ENCODE measurements at regions of chr20 and their contacts with region 1.

Region 1: GRCh38 chr20:2162125-2162822 is 60.6 kb downstream of the STK35 start:
- DNase-seq: no peak
- H3K4me3 ChIP-seq: no peak overlapping the region
- H3K27ac ChIP-seq: no peak overlapping the region
- H3K27me3 ChIP-seq: no peaks in the 10 kb centered on the region
- CTCF ChIP-seq: no peak

Region 2: DNA sequence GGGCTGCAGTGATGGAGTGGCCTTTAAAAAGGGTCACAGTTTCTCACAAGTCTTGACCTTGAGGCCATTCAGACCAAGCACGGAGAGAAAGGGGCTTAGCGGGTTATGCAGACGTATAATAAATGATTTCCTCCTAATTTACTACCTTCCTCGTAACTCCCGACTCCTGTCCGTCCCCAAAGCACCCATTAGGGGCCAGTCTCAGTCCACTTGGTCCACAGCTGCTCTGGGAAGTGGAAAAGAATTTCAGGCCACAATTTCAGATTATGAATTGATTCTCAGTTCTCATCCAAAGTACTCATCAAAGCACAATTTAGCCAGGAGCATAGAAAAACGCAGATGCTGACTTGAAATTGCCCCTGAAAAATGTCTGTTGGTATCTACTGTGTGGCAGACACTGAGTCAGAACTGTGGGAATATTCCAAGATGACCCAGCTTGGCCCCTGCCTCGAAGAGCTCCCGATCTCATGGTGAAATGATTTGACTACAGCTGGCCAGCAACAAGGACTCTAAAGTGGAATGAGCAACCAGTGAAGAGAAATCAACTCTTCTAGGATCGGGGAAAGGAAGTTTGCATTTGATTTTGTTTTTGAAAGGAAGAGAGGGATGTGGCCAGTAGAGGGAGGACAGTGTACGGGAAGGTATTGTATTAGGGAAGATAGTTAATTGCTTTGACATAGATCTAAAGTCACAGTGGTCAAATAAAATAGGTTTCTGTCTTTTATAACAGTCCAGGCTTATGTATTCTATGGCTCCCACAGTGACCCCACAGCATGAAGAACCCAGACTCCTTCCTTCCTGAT is 75.9 kb before region 1 on chr20:
- intact Hi-C with region 1: loop called in 1 of 2 experiments (anchors 10 kb)
- DNase-seq: no peak
- H3K4me3 ChIP-seq: no peak overlapping the region
- H3K27ac ChIP-seq: no peak overlapping the region
- H3K27me3 ChIP-seq: peaks cover 0 to 11% (median 0%) of the 10 kb centered on the region in 45 donors
- CTCF ChIP-seq: peak in 17 of 56 donors; percentile 2 to 47 (median 17)

Measured in dorsolateral prefrontal cortex (tissue), 120 donors.